Panc1 (cell line): ENCODE measurements at regions of chr2 and their contacts with region 1.

Region 1: GRCh38 chr2:24435391-24436316 is 55.4 kb upstream of the NCOA1 start:
- DNase-seq: no peak
- ATAC-seq: no peak
- H3K4me3 ChIP-seq: no peak overlapping the region
- H3K27ac ChIP-seq: no peak overlapping the region
- H3K4me1 ChIP-seq: no peaks in the 10 kb centered on the region
- H3K27me3 ChIP-seq: no peaks in the 10 kb centered on the region
- CTCF ChIP-seq: no peak

Region 2: DNA sequence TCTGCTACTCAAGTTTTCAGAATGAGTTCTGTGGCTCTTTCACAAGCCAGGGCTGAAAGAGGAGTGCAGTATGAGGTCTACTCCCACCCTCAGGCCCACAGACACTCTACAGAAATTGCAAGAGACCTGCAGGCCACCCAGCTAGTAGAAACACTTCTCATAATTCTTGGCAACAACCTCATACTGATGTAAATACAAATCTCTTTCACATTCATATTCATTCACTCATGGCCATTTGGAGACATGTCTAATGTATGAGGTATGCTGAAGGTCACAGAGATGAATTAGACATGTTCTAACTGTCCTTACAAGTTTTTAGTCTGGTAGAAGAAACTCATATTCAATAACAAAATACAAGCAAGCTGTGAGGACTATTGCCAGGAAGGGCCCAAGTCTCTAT is 1134.5 kb before region 1 on chr2:
- CTCF ChIA-PET with region 1: no interaction called
- POLR2A ChIA-PET with region 1: no interaction called
- in situ Hi-C with region 1: no loop called
- intact Hi-C with region 1: no loop called
- DNase-seq: no peak
- ATAC-seq: no peak
- H3K4me3 ChIP-seq: no peak overlapping the region
- H3K27ac ChIP-seq: no peak overlapping the region
- H3K4me1 ChIP-seq: no peaks in the 10 kb centered on the region
- H3K27me3 ChIP-seq: peaks cover 9% of the 10 kb centered on the region; the same call in 1 of the 2 replicates
- CTCF ChIP-seq: no peak

Region 3: GRCh38 chr2:24527536-24527935 is 91.9 kb after region 1 on chr2:
- CTCF ChIA-PET with region 1: no interaction called
- POLR2A ChIA-PET with region 1: no interaction called
- in situ Hi-C with region 1: no loop called
- intact Hi-C with region 1: no loop called
- DNase-seq: no peak
- ATAC-seq: no peak
- H3K4me3 ChIP-seq: no peak overlapping the region
- H3K27ac ChIP-seq: no peak overlapping the region
- H3K4me1 ChIP-seq: no peaks in the 10 kb centered on the region
- H3K27me3 ChIP-seq: no peaks in the 10 kb centered on the region
- CTCF ChIP-seq: no peak

Region 4: GRCh38 chr2:24754985-24755705 is 319.5 kb after region 1 on chr2:
- CTCF ChIA-PET with region 1: no interaction called
- POLR2A ChIA-PET with region 1: interaction called, 14 read pairs
- in situ Hi-C with region 1: no loop called
- intact Hi-C with region 1: no loop called
- DNase-seq: no peak
- ATAC-seq: no peak
- H3K4me3 ChIP-seq: no peak overlapping the region
- H3K27ac ChIP-seq: no peak overlapping the region
- H3K4me1 ChIP-seq: no peaks in the 10 kb centered on the region
- H3K27me3 ChIP-seq: no peaks in the 10 kb centered on the region
- CTCF ChIP-seq: no peak

Region 5: GRCh38 chr2:25453199-25453905 is 1017.7 kb after region 1 on chr2:
- CTCF ChIA-PET with region 1: no interaction called
- POLR2A ChIA-PET with region 1: no interaction called
- in situ Hi-C with region 1: no loop called
- intact Hi-C with region 1: no loop called
- DNase-seq: no peak
- ATAC-seq: no peak
- H3K4me3 ChIP-seq: no peak overlapping the region
- H3K27ac ChIP-seq: no peak overlapping the region
- H3K4me1 ChIP-seq: no peaks in the 10 kb centered on the region
- H3K27me3 ChIP-seq: no peaks in the 10 kb centered on the region
- CTCF ChIP-seq: no peak

Region 6: DNA sequence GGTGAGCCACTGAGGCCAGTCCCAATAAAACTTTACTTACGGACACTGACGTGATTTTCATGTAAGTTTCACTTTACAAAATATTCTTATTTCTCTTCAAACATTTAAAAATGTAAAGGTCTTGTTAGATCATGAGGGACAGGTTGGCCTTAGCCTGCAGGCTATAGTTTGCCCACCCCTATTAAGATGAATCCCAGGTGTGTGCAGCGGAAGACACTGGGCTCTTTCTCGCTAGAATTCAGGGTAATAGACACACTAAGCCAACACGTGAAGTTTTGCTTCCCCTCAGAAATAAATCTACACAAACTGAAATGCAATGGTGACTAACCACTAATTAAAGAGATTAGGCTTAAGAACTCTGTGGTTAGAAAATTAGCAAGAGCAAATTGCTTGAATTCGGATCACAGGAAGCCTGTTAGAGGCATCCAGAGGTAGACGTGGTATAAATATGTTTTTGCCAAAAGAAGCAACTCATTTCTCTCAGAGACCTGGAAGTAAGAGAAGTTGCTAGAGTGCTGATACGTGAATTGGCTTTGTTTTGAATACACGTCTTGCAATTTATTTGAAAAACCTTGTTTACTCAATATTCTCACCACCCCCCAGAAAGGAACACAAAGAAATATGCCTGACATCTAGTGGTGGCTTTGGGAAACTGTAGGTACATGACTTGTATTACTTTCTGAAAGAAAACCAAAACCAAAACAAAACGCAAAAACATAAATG is 1086.2 kb after region 1 on chr2:
- CTCF ChIA-PET with region 1: no interaction called
- POLR2A ChIA-PET with region 1: no interaction called
- in situ Hi-C with region 1: no loop called
- intact Hi-C with region 1: no loop called
- DNase-seq: peak; percentile 35
- ATAC-seq: peak; percentile 84; the same call in 1 of the 2 replicates
- H3K4me3 ChIP-seq: no peak overlapping the region
- H3K27ac ChIP-seq: no peak overlapping the region
- H3K4me1 ChIP-seq: no peaks in the 10 kb centered on the region; the same call in 1 of the 2 replicates
- H3K27me3 ChIP-seq: no peaks in the 10 kb centered on the region
- CTCF ChIP-seq: peak; percentile 80